ENCODE measurements at regions of chr14 and their contacts with region 1.

Region 1: DNA sequence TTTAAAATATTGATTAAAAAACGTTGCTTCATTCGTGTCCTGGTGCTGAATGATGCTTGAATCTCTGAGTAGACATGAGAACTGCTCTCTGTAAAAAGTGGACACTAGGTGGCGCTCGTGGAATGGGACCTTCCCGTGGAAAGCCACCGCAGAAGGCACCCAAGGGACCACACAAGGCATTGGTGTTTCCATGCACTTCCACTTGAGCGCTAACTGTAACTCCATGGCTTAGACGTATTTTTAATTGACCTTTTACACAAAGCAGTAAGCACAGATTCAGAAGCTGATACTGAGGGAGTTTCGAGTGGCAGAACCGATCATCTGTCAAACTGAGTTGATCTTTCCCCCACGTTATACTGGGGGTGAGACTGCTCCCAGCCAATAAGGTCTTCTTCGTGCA is 135.3 kb downstream of the PRKCH start:
- DNase-seq: peak; percentile 63 to 82 (median 77)
- ATAC-seq: peak; percentile 76
- H3K4me3 ChIP-seq: no peak overlapping the region
- H3K4me3 Mint-ChIP-seq: peak overlapping the region in 5 of 10 donors; percentile 5 to 80 (median 51)
- H3K27ac ChIP-seq: peak overlapping the region; percentile 32
- H3K27ac Mint-ChIP-seq: peak overlapping the region in 8 of 9 donors; percentile 70 to 92 (median 86)
- H3K4me1 ChIP-seq: peaks cover 53 to 59% of the 10 kb centered on the region in 2 donors
- H3K4me1 Mint-ChIP-seq: peaks cover 52 to 93% (median 89%) of the 10 kb centered on the region in 7 donors
- H3K27me3 ChIP-seq: no peaks in the 10 kb centered on the region
- H3K27me3 Mint-ChIP-seq: no peaks in the 10 kb centered on the region

Region 2: DNA sequence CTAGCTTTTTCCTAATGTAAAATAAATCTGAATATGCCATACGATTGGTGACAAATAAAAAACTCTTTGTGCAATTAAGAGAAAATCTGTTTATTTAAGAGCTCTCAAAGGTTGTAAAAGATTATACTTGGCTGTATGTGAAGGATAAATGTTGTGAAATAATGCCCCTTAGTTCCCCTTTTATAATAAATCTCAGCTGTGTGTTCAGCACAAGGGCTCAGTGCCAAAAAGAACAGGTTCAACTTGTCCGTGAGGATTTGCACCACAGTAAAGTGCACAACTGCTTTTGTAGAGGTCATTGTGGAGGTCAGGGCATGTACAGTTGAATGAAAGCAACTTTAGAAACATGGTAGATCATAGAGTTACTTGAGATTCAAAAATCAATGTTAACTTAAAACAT is 594.4 kb before region 1 on chr14:
- CTCF ChIA-PET with region 1: no interaction called
- POLR2A ChIA-PET with region 1: no interaction called
- intact Hi-C with region 1: no loop called
- DNase-seq: no peak
- ATAC-seq: no peak
- H3K4me3 ChIP-seq: no peak overlapping the region
- H3K4me3 Mint-ChIP-seq: no peak overlapping the region
- H3K27ac ChIP-seq: no peak overlapping the region
- H3K27ac Mint-ChIP-seq: no peak overlapping the region
- H3K4me1 ChIP-seq: no peaks in the 10 kb centered on the region
- H3K4me1 Mint-ChIP-seq: peaks cover 0 to 6% (median 4%) of the 10 kb centered on the region in 7 donors
- H3K27me3 ChIP-seq: no peaks in the 10 kb centered on the region
- H3K27me3 Mint-ChIP-seq: peaks cover 0 to 4% (median 0%) of the 10 kb centered on the region in 5 donors

Region 3: DNA sequence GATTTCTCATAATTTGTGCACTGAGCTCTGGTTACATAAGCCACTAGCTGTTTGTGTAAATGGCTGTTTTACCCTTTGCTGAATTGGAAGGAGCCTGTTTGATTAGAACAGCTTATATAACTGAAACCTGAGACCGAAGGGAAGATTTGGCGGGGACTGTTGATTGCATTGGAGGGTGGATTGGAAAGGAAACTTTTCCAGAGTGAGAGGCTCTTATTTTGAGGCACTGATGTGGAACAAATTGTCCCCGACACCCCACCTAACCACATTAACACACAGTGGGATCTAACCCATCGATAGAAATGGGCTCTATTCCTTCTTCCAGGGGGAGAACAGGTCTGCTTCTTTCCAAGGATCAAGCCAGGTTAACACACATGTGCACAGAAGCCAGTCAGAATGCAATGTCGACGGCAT is 227.2 kb before region 1 on chr14:
- CTCF ChIA-PET with region 1: no interaction called
- POLR2A ChIA-PET with region 1: no interaction called
- intact Hi-C with region 1: no loop called
- DNase-seq: no peak
- ATAC-seq: no peak
- H3K4me3 ChIP-seq: no peak overlapping the region
- H3K4me3 Mint-ChIP-seq: no peak overlapping the region
- H3K27ac ChIP-seq: no peak overlapping the region
- H3K27ac Mint-ChIP-seq: no peak overlapping the region
- H3K4me1 ChIP-seq: no peaks in the 10 kb centered on the region
- H3K4me1 Mint-ChIP-seq: peaks cover 0 to 6% (median 0%) of the 10 kb centered on the region in 7 donors
- H3K27me3 ChIP-seq: no peaks in the 10 kb centered on the region
- H3K27me3 Mint-ChIP-seq: peaks cover 9 to 32% (median 24%) of the 10 kb centered on the region in 5 donors

Region 4: DNA sequence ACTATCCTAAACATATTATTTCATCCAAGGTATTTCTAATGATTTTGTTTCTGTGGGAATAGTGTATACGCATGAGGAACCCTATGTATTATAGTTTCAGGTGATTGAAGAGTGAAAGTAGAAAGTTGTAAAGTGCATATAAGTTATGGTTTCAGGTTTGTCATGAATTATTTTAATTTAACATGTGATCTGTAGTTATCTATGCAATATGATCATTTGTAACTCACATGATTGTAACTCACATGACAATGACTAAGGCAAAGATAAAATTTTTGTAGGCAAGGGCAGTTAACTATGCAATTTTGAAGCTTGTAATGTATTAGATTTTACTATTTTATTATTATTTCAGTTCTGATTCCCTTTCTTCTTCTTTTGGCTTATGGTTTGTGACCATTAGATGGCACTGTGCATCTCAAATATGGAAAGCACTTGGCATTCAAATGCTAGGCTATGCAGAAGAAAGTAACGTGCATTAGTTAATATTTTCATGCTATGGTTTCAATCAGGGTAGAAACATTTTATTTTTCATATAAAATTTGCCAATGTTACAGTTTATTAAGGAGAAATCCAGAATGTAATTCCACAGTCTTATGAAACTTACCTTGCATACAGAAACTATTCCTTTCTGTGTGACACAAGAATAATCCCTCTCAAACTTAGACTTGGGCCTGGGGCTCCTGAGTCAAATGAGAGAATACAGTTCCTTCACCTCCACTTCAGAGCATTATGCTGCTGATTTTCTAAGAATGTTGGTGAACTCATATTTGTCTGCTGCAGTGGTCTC is 159.8 kb before region 1 on chr14:
- CTCF ChIA-PET with region 1: interaction called, 7 read pairs
- POLR2A ChIA-PET with region 1: interaction called, 3 read pairs
- intact Hi-C with region 1: loop called (anchors 1 kb)
- DNase-seq: peak in 7 of 9 donors; percentile 38 to 68 (median 52)
- ATAC-seq: peak; percentile 85
- H3K4me3 ChIP-seq: no peak overlapping the region
- H3K4me3 Mint-ChIP-seq: peak overlapping the region in 2 of 10 donors; percentile 20 to 39
- H3K27ac ChIP-seq: no peak overlapping the region
- H3K27ac Mint-ChIP-seq: peak overlapping the region in 7 of 9 donors; percentile 26 to 88 (median 66)
- H3K4me1 ChIP-seq: peaks cover 15 to 40% of the 10 kb centered on the region in 2 donors
- H3K4me1 Mint-ChIP-seq: peaks cover 18 to 59% (median 56%) of the 10 kb centered on the region in 7 donors
- H3K27me3 ChIP-seq: no peaks in the 10 kb centered on the region
- H3K27me3 Mint-ChIP-seq: no peaks in the 10 kb centered on the region

Region 5: GRCh38 chr14:61388173-61388975 is 68.3 kb before region 1 on chr14:
- CTCF ChIA-PET with region 1: interaction called, 3 read pairs
- POLR2A ChIA-PET with region 1: interaction called, 14 read pairs
- intact Hi-C with region 1: loop called in 1 of 2 experiments (anchors 1 kb)
- DNase-seq: peak in 6 of 9 donors; percentile 38 to 56 (median 50)
- ATAC-seq: peak; percentile 76
- H3K4me3 ChIP-seq: peak overlapping the region; percentile 50
- H3K4me3 Mint-ChIP-seq: peak overlapping the region in 1 of 10 donors; percentile 74
- H3K27ac ChIP-seq: peak overlapping the region; percentile 71
- H3K27ac Mint-ChIP-seq: no peak overlapping the region
- H3K4me1 ChIP-seq: peaks cover 93 to 96% of the 10 kb centered on the region in 2 donors
- H3K4me1 Mint-ChIP-seq: peaks cover 0 to 46% (median 12%) of the 10 kb centered on the region in 7 donors
- H3K27me3 ChIP-seq: no peaks in the 10 kb centered on the region
- H3K27me3 Mint-ChIP-seq: no peaks in the 10 kb centered on the region

Region 6: GRCh38 chr14:61403411-61403810 is 53.3 kb before region 1 on chr14:
- CTCF ChIA-PET with region 1: interaction called, 3 read pairs
- POLR2A ChIA-PET with region 1: interaction called, 3 read pairs
- intact Hi-C with region 1: loop called (anchors 1 to 2 kb)
- DNase-seq: peak in 7 of 9 donors; percentile 52 to 79 (median 67)
- ATAC-seq: peak; percentile 89
- H3K4me3 ChIP-seq: peak overlapping the region; percentile 3
- H3K4me3 Mint-ChIP-seq: peak overlapping the region; percentile 17 to 84 (median 76)
- H3K27ac ChIP-seq: peak overlapping the region; percentile 71
- H3K27ac Mint-ChIP-seq: peak overlapping the region in 8 of 9 donors; percentile 76 to 96 (median 91)
- H3K4me1 ChIP-seq: peaks cover 84 to 88% of the 10 kb centered on the region in 2 donors
- H3K4me1 Mint-ChIP-seq: peaks cover 0 to 93% (median 70%) of the 10 kb centered on the region in 7 donors
- H3K27me3 ChIP-seq: no peaks in the 10 kb centered on the region
- H3K27me3 Mint-ChIP-seq: no peaks in the 10 kb centered on the region

Region 7: GRCh38 chr14:61420326-61420725 is 36.4 kb before region 1 on chr14:
- CTCF ChIA-PET with region 1: no interaction called
- POLR2A ChIA-PET with region 1: interaction called, 3 read pairs
- intact Hi-C with region 1: loop called in 1 of 2 experiments (anchors 1 kb)
- DNase-seq: peak in 1 of 9 donors; percentile 37
- ATAC-seq: peak; percentile 24
- H3K4me3 ChIP-seq: no peak overlapping the region
- H3K4me3 Mint-ChIP-seq: peak overlapping the region in 8 of 10 donors; percentile 43 to 77 (median 58)
- H3K27ac ChIP-seq: peak overlapping the region; percentile 41
- H3K27ac Mint-ChIP-seq: peak overlapping the region in 6 of 9 donors; percentile 75 to 88 (median 83)
- H3K4me1 ChIP-seq: peaks cover 81 to 83% of the 10 kb centered on the region in 2 donors
- H3K4me1 Mint-ChIP-seq: peaks cover 4 to 90% (median 26%) of the 10 kb centered on the region in 7 donors
- H3K27me3 ChIP-seq: no peaks in the 10 kb centered on the region
- H3K27me3 Mint-ChIP-seq: no peaks in the 10 kb centered on the region

Region 8: GRCh38 chr14:61438860-61439684 is 17.6 kb before region 1 on chr14:
- CTCF ChIA-PET with region 1: interaction called, 3 read pairs
- POLR2A ChIA-PET with region 1: interaction called, 5 read pairs
- intact Hi-C with region 1: loop called (anchors 1 kb)
- DNase-seq: peak in 7 of 9 donors; percentile 23 to 53 (median 31)
- ATAC-seq: peak; percentile 75
- H3K4me3 ChIP-seq: peak overlapping the region; percentile 45
- H3K4me3 Mint-ChIP-seq: peak overlapping the region; percentile 76 to 88 (median 85)
- H3K27ac ChIP-seq: peak overlapping the region; percentile 64
- H3K27ac Mint-ChIP-seq: peak overlapping the region in 7 of 9 donors; percentile 77 to 96 (median 88)
- H3K4me1 ChIP-seq: peaks cover 74 to 89% of the 10 kb centered on the region in 2 donors
- H3K4me1 Mint-ChIP-seq: peaks cover 58 to 96% (median 90%) of the 10 kb centered on the region in 7 donors
- H3K27me3 ChIP-seq: no peaks in the 10 kb centered on the region
- H3K27me3 Mint-ChIP-seq: no peaks in the 10 kb centered on the region

Region 9: GRCh38 chr14:61444215-61444768 is 12.4 kb before region 1 on chr14:
- CTCF ChIA-PET with region 1: interaction called, 3 read pairs
- POLR2A ChIA-PET with region 1: interaction called, 3 read pairs
- intact Hi-C with region 1: loop called (anchors 1 kb)
- DNase-seq: peak in 8 of 9 donors; percentile 36 to 77 (median 54)
- ATAC-seq: peak; percentile 89
- H3K4me3 ChIP-seq: peak overlapping the region; percentile 9
- H3K4me3 Mint-ChIP-seq: peak overlapping the region; percentile 61 to 89 (median 82)
- H3K27ac ChIP-seq: peak overlapping the region; percentile 59
- H3K27ac Mint-ChIP-seq: peak overlapping the region in 8 of 9 donors; percentile 86 to 97 (median 92)
- H3K4me1 ChIP-seq: peaks cover 77 to 90% of the 10 kb centered on the region in 2 donors
- H3K4me1 Mint-ChIP-seq: peaks cover 56 to 99% (median 93%) of the 10 kb centered on the region in 7 donors
- H3K27me3 ChIP-seq: no peaks in the 10 kb centered on the region
- H3K27me3 Mint-ChIP-seq: no peaks in the 10 kb centered on the region

Region 10: DNA sequence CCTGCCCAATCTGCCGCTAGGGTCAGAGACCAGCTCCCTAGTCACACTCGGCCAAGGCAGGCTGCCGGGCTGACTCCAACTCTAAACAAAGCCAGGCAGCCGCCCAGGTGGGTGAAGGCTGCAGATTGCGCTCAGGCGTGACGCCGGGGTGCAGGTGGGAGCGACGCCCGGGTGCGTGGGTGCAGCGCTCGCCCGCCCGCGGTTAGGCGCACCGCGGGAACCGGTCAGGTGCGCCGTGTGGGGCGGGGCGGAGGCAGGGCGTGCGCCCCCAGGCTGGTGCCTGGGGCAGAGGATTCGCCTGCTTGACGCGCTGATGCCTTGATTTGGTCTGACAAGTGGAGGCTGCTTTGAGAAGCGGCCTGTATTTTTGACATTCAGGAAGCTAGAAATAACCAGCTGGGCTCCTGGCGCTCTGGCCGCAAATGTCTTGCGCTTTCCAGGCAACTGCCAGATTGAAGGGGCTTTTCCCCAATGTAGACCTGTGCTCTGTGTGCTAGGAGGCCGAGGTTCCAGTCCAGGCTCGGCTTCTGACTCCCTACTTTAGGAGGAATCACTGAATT is 111.9 kb after region 1 on chr14:
- CTCF ChIA-PET with region 1: no interaction called
- POLR2A ChIA-PET with region 1: no interaction called
- intact Hi-C with region 1: no loop called
- DNase-seq: peak; percentile 49 to 77 (median 73)
- ATAC-seq: peak; percentile 86
- H3K4me3 ChIP-seq: peak overlapping the region; percentile 47
- H3K4me3 Mint-ChIP-seq: peak overlapping the region; percentile 74 to 89 (median 82)
- H3K27ac ChIP-seq: peak overlapping the region; percentile 26
- H3K27ac Mint-ChIP-seq: peak overlapping the region; percentile 44 to 95 (median 86)
- H3K4me1 ChIP-seq: peaks cover 0 to 34% of the 10 kb centered on the region in 2 donors
- H3K4me1 Mint-ChIP-seq: peaks cover 40 to 77% (median 57%) of the 10 kb centered on the region in 7 donors
- H3K27me3 ChIP-seq: no peaks in the 10 kb centered on the region
- H3K27me3 Mint-ChIP-seq: peaks cover 0 to 10% (median 0%) of the 10 kb centered on the region in 5 donors

Measured in naive thymus-derived CD4-positive, alpha-beta T cell (primary cell).